Mammary epithelial cell (primary cell): ENCODE measurements at regions of chr1 and their contacts with region 1.

Region 1: GRCh38 chr1:26233903-26234643 is at the start of gene CEP85:
- DNase-seq: peak; percentile 97
- H3K4me3 ChIP-seq: peak within 1 kb of the TSS; percentile 79 to 97 (median 87)
- H3K27ac ChIP-seq: peak within 1 kb of the TSS; percentile 66
- H3K4me1 ChIP-seq: peaks cover 16% of the 10 kb centered on the region
- H3K27me3 ChIP-seq: no peaks in the 10 kb centered on the region
- CTCF ChIP-seq: peak; percentile 88 to 96
- total RNA-seq, gene CEP85: 14.3 to 16.9 TPM

Region 2: GRCh38 chr1:26177182-26177684 is 56.8 kb before region 1 on chr1 and contains the start of gene CNKSR1:
- CTCF ChIA-PET with region 1: interaction called, 23 read pairs
- dilution Hi-C with region 1: no loop called
- in situ Hi-C with region 1: loop called in 1 of 2 experiments (anchors 5 kb)
- intact Hi-C with region 1: no loop called
- DNase-seq: peak; percentile 84
- H3K4me3 ChIP-seq: peak within 1 kb of the TSS; percentile 65 to 75 (median 73)
- H3K27ac ChIP-seq: peak within 1 kb of the TSS; percentile 80
- H3K4me1 ChIP-seq: peaks cover 33% of the 10 kb centered on the region
- H3K27me3 ChIP-seq: no peaks in the 10 kb centered on the region
- CTCF ChIP-seq: peak in 1 of 2 donors; percentile 58
- total RNA-seq, gene CNKSR1: 26.0 to 38.2 TPM

Region 3: DNA sequence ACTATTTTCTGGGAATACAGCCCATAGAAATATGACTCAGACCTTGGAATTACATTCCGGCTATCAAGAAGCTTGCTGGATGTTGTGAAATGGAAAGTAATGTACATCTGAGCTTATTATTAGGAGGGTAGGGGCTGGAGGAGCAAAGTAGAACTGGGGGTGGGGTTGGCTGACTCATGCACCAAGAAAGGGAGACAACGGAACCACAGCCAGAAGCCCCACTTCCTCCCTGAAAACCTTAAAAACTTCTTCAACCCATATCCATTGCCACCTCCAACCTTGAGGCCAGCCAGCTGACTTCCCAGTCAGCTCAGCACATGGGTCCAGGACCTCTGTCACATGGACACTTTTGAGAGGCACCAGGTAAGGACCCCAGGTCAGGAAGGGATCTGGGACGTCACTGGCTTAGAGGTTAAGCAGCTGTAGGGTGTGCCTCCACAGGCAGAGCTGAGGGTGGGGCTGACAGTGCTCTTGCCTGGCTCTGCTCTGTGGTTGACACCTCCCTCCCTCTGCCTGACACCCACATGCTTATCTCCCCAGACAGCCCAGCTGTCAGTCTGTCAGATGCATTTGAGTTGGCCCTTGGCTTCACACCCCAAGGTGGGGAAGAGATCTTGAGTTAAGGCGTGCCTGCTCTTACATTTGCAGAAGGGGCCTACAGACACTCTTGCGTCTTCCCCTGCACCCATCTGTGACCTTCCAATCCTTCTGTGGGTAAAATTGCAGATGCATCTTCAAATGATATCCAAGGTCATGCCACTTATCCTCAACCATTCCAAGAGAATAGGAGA is 144.2 kb after region 1 on chr1:
- CTCF ChIA-PET with region 1: interaction called, 10 read pairs
- dilution Hi-C with region 1: no loop called
- in situ Hi-C with region 1: no loop called
- intact Hi-C with region 1: no loop called
- DNase-seq: peak; percentile 87
- H3K4me3 ChIP-seq: no peak overlapping the region
- H3K27ac ChIP-seq: peak overlapping the region; percentile 84
- H3K4me1 ChIP-seq: peaks cover 18% of the 10 kb centered on the region
- H3K27me3 ChIP-seq: no peaks in the 10 kb centered on the region
- CTCF ChIP-seq: no peak